CD4-positive, alpha-beta memory T cell (primary cell): ENCODE measurements at regions of chr18 and their contacts with region 1.

Region 1: DNA sequence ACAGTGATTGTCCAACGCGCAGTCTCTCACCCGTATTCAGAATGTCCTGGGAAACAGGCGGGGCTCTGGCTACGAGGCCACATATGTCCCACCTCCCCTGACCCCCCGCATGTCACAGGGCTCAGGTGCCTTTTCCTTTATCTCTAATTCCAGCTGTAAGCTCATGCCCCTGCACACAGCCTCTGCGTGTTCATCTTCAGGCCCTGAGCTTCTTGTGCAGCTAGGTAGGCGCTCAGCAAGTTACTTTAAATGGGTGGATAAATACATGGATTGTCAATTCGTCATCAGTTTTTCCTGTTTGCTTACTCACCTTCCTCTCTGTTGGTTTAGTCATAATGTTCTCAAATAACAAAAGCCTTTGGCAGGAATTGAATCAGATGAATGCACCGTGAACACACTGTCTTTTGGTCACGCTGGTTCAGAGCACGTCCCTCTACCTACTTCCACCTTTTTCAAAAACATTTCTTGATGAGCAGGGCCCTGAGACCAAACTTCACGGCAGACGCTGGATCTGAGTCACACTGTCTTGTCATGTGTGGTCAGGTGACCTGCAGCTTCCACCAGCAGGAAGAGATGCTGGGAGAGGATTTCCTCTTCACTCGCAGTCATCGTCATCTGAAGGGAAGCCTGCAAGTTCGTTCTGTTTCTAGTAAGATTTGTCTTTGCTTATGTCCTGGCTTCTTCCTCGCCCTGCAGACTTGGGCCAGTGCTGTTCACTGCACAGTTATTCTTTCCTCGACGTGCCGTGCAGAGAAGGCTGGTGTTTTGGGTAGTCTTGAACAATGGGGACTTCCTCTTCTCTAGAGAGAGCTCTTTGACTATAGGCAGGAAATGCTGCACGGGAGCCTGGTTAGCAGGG is 138.1 kb downstream of the PTGR3 start:
- DNase-seq: peak; percentile 70 to 89 (median 74)
- H3K4me3 ChIP-seq: peak overlapping the region; percentile 51 to 58
- H3K4me3 Mint-ChIP-seq: peak overlapping the region; percentile 79 to 97 (median 90)
- H3K27ac ChIP-seq: peak overlapping the region; percentile 74
- H3K27ac Mint-ChIP-seq: peak overlapping the region; percentile 89 to 100 (median 99)
- H3K4me1 ChIP-seq: peaks cover 34% of the 10 kb centered on the region
- H3K4me1 Mint-ChIP-seq: peaks cover 35 to 57% (median 41%) of the 10 kb centered on the region in 4 donors
- H3K27me3 ChIP-seq: no peaks in the 10 kb centered on the region
- H3K27me3 Mint-ChIP-seq: no peaks in the 10 kb centered on the region

Region 2: DNA sequence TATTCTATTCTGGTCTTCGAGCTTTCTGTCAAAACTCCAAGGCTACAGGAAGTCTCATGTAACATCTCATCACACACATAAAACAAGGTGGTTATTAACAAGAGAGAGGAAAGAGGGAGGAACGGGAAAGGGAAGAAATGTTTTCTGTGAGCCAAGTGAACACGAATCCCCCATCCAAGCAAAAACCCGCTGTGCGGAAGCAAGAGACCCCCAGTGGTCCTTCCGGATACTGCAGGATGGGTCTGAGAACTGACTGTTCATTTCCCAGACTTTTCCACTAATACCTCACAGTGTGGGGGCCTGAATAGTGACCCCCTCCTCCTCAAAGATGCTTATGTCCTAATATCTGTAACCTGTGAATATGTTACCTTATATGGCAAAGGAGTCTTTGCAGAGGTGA is 594.7 kb before region 1 on chr18:
- CTCF ChIA-PET with region 1: no interaction called
- POLR2A ChIA-PET with region 1: no interaction called
- intact Hi-C with region 1: no loop called
- DNase-seq: no peak
- H3K4me3 ChIP-seq: no peak overlapping the region
- H3K4me3 Mint-ChIP-seq: no peak overlapping the region
- H3K27ac ChIP-seq: no peak overlapping the region
- H3K27ac Mint-ChIP-seq: no peak overlapping the region
- H3K4me1 ChIP-seq: no peaks in the 10 kb centered on the region
- H3K4me1 Mint-ChIP-seq: no peaks in the 10 kb centered on the region
- H3K27me3 ChIP-seq: no peaks in the 10 kb centered on the region
- H3K27me3 Mint-ChIP-seq: peaks cover 0 to 16% of the 10 kb centered on the region in 2 donors

Region 3: GRCh38 chr18:74951165-74951760 is 119.6 kb before region 1 on chr18:
- CTCF ChIA-PET with region 1: no interaction called
- POLR2A ChIA-PET with region 1: interaction called, 4 read pairs
- intact Hi-C with region 1: loop called (anchors 2 kb)
- DNase-seq: peak; percentile 42 to 62 (median 49)
- H3K4me3 ChIP-seq: no peak overlapping the region
- H3K4me3 Mint-ChIP-seq: peak overlapping the region in 7 of 8 donors; percentile 50 to 81 (median 68)
- H3K27ac ChIP-seq: no peak overlapping the region
- H3K27ac Mint-ChIP-seq: peak overlapping the region; percentile 86 to 94 (median 90)
- H3K4me1 ChIP-seq: peaks cover 28% of the 10 kb centered on the region
- H3K4me1 Mint-ChIP-seq: peaks cover 23 to 30% (median 26%) of the 10 kb centered on the region in 4 donors
- H3K27me3 ChIP-seq: no peaks in the 10 kb centered on the region
- H3K27me3 Mint-ChIP-seq: no peaks in the 10 kb centered on the region

Region 4: DNA sequence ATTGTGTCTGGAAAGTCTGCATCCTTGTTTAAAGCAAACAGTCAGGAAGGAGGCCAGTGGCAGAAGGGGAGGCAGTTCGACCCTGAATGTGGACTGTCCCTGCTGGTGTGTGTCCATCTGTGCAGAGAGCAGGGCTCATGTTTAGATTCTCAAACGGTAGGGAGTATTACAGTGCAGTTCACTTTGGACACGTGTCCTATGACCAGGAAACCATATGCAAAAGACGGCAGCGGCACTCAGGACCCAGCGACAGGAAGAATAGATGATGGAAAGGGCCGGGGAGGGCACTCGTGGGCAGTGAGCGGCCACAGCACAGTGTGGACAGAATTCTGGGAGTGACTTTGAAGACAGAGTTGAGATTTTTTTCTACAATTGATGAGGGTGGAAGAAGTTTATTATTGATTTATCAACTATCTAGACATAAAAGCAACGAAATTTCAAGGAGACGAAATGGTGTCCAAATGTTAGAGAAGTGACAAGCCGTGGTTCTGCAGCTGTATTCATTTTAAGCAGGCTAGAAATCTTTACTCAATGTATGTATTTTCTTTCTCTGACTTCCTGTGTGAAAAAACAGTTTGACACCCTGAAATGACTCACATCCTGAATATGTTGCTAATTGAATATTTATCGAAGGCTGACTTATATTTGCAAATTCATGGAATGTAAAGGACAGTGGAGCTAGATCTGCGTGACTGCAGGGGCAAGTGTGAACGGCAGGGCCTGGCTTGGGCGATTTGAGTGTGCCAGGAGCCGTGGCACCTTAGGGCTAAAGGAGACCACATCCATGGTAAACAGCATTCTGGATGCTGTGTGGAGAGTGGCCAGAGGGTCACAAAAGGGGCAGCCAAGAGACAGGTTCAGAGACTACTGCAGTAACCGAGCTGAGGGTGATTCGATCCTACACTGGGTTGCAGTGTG is 76.1 kb before region 1 on chr18:
- CTCF ChIA-PET with region 1: interaction called, 5 read pairs
- POLR2A ChIA-PET with region 1: interaction called, 11 read pairs
- intact Hi-C with region 1: loop called (anchors 2 kb)
- DNase-seq: peak; percentile 26 to 37 (median 36)
- H3K4me3 ChIP-seq: peak overlapping the region; percentile 2 to 42
- H3K4me3 Mint-ChIP-seq: peak overlapping the region; percentile 76 to 88 (median 82)
- H3K27ac ChIP-seq: peak overlapping the region; percentile 45
- H3K27ac Mint-ChIP-seq: peak overlapping the region; percentile 58 to 93 (median 85)
- H3K4me1 ChIP-seq: peaks cover 41% of the 10 kb centered on the region
- H3K4me1 Mint-ChIP-seq: peaks cover 34 to 59% (median 43%) of the 10 kb centered on the region in 4 donors
- H3K27me3 ChIP-seq: no peaks in the 10 kb centered on the region
- H3K27me3 Mint-ChIP-seq: no peaks in the 10 kb centered on the region

Region 5: GRCh38 chr18:75123113-75123512 is 52.3 kb after region 1 on chr18:
- CTCF ChIA-PET with region 1: no interaction called
- POLR2A ChIA-PET with region 1: no interaction called
- intact Hi-C with region 1: no loop called
- DNase-seq: no peak
- H3K4me3 ChIP-seq: no peak overlapping the region
- H3K4me3 Mint-ChIP-seq: no peak overlapping the region
- H3K27ac ChIP-seq: no peak overlapping the region
- H3K27ac Mint-ChIP-seq: no peak overlapping the region
- H3K4me1 ChIP-seq: no peaks in the 10 kb centered on the region
- H3K4me1 Mint-ChIP-seq: peaks cover 7 to 14% (median 9%) of the 10 kb centered on the region in 4 donors
- H3K27me3 ChIP-seq: no peaks in the 10 kb centered on the region
- H3K27me3 Mint-ChIP-seq: peaks cover 3 to 4% of the 10 kb centered on the region in 2 donors

Region 6: DNA sequence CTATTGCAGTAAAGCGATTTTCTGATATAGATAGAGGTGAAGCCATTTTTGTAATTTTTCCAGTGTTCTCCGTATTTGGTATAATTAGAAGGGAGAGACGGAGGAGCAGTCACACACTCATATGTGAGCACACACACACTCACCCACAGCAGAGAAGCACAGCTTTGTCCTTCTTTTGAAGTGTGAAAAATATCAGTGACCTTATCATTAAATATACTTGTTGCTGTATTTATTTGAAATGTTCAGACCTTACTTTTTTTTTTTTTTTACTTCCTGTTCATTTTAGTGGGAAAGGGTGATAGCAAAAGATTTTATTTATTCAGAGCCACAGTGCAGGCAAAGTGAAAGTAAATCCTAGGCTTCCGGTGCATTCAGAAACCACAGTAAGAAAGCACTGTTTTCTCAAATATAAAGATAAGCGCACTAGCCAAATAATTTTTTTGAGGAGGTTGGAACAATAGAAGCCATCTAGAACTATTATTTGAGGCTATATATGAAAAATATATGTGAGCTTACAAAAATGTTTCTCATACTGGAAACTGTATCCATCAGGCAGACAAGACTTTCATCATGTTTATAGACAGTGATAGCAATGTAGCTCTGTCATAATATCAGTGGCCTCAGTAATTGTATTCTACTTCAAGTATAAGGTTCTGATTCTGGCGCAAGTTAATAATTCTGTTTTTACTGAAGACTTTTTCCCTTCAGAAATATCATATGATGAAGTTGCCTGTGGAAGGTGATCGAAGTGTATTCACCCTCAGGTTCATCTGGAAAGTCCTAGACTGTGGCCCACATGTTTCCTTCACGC is 177.0 kb after region 1 on chr18:
- CTCF ChIA-PET with region 1: no interaction called
- POLR2A ChIA-PET with region 1: no interaction called
- intact Hi-C with region 1: loop called (anchors 1 kb)
- DNase-seq: peak in 4 of 5 donors; percentile 51 to 61 (median 56)
- H3K4me3 ChIP-seq: peak overlapping the region; percentile 19 to 49
- H3K4me3 Mint-ChIP-seq: peak overlapping the region; percentile 80 to 91 (median 88)
- H3K27ac ChIP-seq: peak overlapping the region; percentile 46
- H3K27ac Mint-ChIP-seq: peak overlapping the region; percentile 88 to 98 (median 93)
- H3K4me1 ChIP-seq: peaks cover 51% of the 10 kb centered on the region
- H3K4me1 Mint-ChIP-seq: peaks cover 51 to 92% (median 70%) of the 10 kb centered on the region in 4 donors
- H3K27me3 ChIP-seq: no peaks in the 10 kb centered on the region
- H3K27me3 Mint-ChIP-seq: no peaks in the 10 kb centered on the region

Region 7: GRCh38 chr18:75915941-75916640 is 845.2 kb after region 1 on chr18:
- CTCF ChIA-PET with region 1: no interaction called
- POLR2A ChIA-PET with region 1: no interaction called
- intact Hi-C with region 1: no loop called
- DNase-seq: no peak
- H3K4me3 ChIP-seq: no peak overlapping the region
- H3K4me3 Mint-ChIP-seq: no peak overlapping the region
- H3K27ac ChIP-seq: no peak overlapping the region
- H3K27ac Mint-ChIP-seq: no peak overlapping the region
- H3K4me1 ChIP-seq: no peaks in the 10 kb centered on the region
- H3K4me1 Mint-ChIP-seq: no peaks in the 10 kb centered on the region
- H3K27me3 ChIP-seq: no peaks in the 10 kb centered on the region
- H3K27me3 Mint-ChIP-seq: peaks cover 6 to 8% of the 10 kb centered on the region in 2 donors